Activated CD8-positive, alpha-beta T cell treated with anti-CD3 and anti-CD28 coated beads, Interleukin-2, amount 10 ng/mL, durations not matched to agents 7 days and 5 days (primary cell): ENCODE measurements at regions of chr5 and their contacts with region 1.

Region 1: GRCh38 chr5:62354028-62354874 is 48.2 kb downstream of the KIF2A start:
- DNase-seq: peak; percentile 47
- ATAC-seq: peak; percentile 77
- H3K4me3 Mint-ChIP-seq: no peak overlapping the region
- H3K27ac Mint-ChIP-seq: no peak overlapping the region
- H3K4me1 Mint-ChIP-seq: peaks cover 13% of the 10 kb centered on the region
- H3K27me3 Mint-ChIP-seq: no peaks in the 10 kb centered on the region

Region 2: DNA sequence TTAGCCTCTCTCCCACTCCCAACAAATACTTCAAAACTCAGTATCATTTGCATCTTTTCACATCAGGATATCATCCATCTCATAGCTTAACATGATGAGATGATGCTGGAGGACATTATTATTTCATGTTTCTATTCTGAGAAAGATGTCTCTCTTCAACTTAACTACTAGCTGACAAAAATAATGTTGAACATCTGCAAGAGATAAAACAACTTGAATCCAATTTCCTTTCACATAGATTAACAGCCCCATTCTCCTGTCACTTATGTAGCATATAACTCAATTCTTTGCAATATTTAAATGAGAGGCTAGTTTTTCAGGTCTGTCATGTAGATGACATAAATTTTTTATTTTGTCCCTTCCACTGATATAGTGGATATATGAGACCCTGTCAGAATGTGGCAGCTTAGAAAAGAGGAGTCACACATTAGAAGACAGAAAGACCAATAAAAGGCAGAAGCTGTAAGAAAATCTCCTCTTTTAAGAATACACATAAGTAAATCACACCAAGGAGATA is 287.4 kb before region 1 on chr5:
- CTCF ChIA-PET with region 1: no interaction called
- POLR2A ChIA-PET with region 1: no interaction called
- DNase-seq: no peak
- ATAC-seq: no peak
- H3K4me3 Mint-ChIP-seq: no peak overlapping the region
- H3K27ac Mint-ChIP-seq: no peak overlapping the region
- H3K4me1 Mint-ChIP-seq: no peaks in the 10 kb centered on the region
- H3K27me3 Mint-ChIP-seq: no peaks in the 10 kb centered on the region

Region 3: GRCh38 chr5:62178258-62178657 is 176.0 kb before region 1 on chr5:
- CTCF ChIA-PET with region 1: no interaction called
- POLR2A ChIA-PET with region 1: no interaction called
- DNase-seq: no peak
- ATAC-seq: no peak
- H3K4me3 Mint-ChIP-seq: no peak overlapping the region
- H3K27ac Mint-ChIP-seq: no peak overlapping the region
- H3K4me1 Mint-ChIP-seq: no peaks in the 10 kb centered on the region
- H3K27me3 Mint-ChIP-seq: peaks cover 6% of the 10 kb centered on the region

Region 4: DNA sequence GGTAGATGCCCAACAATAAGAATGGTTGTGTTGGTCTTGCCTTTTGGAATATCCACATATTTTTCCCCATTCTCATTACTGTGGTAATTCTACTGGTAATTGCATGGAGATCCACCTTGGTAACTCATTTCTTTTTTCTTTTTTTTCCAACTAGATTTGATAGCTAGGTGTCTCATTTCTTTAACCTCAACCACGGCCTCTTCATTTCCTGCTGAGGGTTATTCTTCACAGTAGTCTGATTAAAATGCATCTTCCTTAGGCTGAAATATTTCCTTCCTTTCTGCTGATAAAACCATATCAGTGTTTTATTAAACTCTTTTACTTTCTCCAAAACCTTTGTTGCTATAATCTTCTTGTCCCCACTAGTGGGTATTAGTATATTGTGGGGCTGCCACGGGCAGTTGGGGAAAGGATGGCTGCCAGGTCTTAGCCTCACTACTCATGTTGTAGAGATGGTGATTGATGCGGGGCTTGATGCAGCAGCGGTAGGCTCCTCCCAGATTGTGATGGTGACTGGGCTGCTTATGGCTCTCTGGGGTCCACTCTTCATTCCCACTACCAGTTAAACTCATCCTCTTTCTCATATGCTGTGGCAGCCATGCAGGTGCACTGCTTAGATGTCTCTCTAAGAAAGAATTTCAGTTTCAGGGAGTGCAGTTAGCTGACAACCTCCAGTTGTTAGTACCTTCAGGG is 12.3 kb before region 1 on chr5:
- CTCF ChIA-PET with region 1: interaction called, 15 read pairs
- POLR2A ChIA-PET with region 1: no interaction called
- DNase-seq: peak; percentile 45
- ATAC-seq: peak; percentile 84
- H3K4me3 Mint-ChIP-seq: peak overlapping the region; percentile 61
- H3K27ac Mint-ChIP-seq: peak overlapping the region; percentile 85
- H3K4me1 Mint-ChIP-seq: peaks cover 50% of the 10 kb centered on the region
- H3K27me3 Mint-ChIP-seq: no peaks in the 10 kb centered on the region

Region 5: DNA sequence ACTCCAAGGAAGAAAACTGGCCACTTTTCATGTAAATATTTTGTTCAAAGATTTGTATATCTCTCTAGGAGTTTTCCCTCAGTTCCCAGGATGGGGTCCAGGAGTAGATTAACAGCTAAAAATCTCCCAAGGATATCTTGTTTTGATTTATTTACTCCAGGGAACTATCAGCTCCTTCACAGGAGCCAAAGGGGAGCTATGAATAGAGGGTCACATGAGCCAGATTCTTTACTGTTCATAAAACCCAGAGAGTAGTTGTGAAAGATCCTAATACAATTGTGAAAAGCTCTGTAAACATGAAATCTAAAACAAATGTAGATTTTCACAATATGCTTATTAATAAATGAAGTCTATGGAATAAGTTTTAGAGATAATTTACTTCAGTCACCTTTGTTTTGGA is 32.6 kb after region 1 on chr5:
- CTCF ChIA-PET with region 1: interaction called, 11 read pairs
- POLR2A ChIA-PET with region 1: no interaction called
- DNase-seq: no peak
- ATAC-seq: no peak
- H3K4me3 Mint-ChIP-seq: no peak overlapping the region
- H3K27ac Mint-ChIP-seq: no peak overlapping the region
- H3K4me1 Mint-ChIP-seq: peaks cover 9% of the 10 kb centered on the region
- H3K27me3 Mint-ChIP-seq: no peaks in the 10 kb centered on the region

Region 6: GRCh38 chr5:62578540-62578939 is 224.3 kb after region 1 on chr5 and contains the start of gene LRRC70:
- CTCF ChIA-PET with region 1: no interaction called
- POLR2A ChIA-PET with region 1: no interaction called
- DNase-seq: peak; percentile 43
- ATAC-seq: peak; percentile 97
- H3K4me3 Mint-ChIP-seq: peak within 1 kb of the TSS; percentile 49
- H3K27ac Mint-ChIP-seq: peak within 1 kb of the TSS; percentile 75
- H3K4me1 Mint-ChIP-seq: peaks cover 11% of the 10 kb centered on the region
- H3K27me3 Mint-ChIP-seq: no peaks in the 10 kb centered on the region
- total RNA-seq, gene LRRC70: 0.97 to 1.4 TPM